ENCODE measurements at regions of chr10 and their contacts with region 1.

Region 1: GRCh38 chr10:102055647-102056419 is at the start of gene ARMH3:
- DNase-seq: peak; percentile 98
- H3K4me3 ChIP-seq: peak within 1 kb of the TSS; percentile 86
- H3K27ac ChIP-seq: peak within 1 kb of the TSS; percentile 30
- H3K4me1 ChIP-seq: peaks cover 30% of the 10 kb centered on the region
- CTCF ChIP-seq: no peak
- total RNA-seq, gene ARMH3: 5.7 and 7.9 TPM in 2 replicates

Region 2: GRCh38 chr10:102083541-102083940 is 27.7 kb after region 1 on chr10:
- CTCF ChIA-PET with region 1: interaction called, 3 read pairs
- POLR2A ChIA-PET with region 1: interaction called, 12 read pairs
- intact Hi-C with region 1: no loop called
- DNase-seq: no peak
- H3K4me3 ChIP-seq: no peak overlapping the region
- H3K27ac ChIP-seq: no peak overlapping the region
- H3K4me1 ChIP-seq: peaks cover 6% of the 10 kb centered on the region
- CTCF ChIP-seq: no peak

Region 3: GRCh38 chr10:102101152-102101551 is 45.3 kb after region 1 on chr10:
- CTCF ChIA-PET with region 1: no interaction called
- POLR2A ChIA-PET with region 1: no interaction called
- intact Hi-C with region 1: no loop called
- DNase-seq: no peak
- H3K4me3 ChIP-seq: no peak overlapping the region
- H3K27ac ChIP-seq: no peak overlapping the region
- H3K4me1 ChIP-seq: no peaks in the 10 kb centered on the region
- CTCF ChIP-seq: no peak